ENCODE measurements at regions of chr4 and their contacts with region 1.

Region 1: DNA sequence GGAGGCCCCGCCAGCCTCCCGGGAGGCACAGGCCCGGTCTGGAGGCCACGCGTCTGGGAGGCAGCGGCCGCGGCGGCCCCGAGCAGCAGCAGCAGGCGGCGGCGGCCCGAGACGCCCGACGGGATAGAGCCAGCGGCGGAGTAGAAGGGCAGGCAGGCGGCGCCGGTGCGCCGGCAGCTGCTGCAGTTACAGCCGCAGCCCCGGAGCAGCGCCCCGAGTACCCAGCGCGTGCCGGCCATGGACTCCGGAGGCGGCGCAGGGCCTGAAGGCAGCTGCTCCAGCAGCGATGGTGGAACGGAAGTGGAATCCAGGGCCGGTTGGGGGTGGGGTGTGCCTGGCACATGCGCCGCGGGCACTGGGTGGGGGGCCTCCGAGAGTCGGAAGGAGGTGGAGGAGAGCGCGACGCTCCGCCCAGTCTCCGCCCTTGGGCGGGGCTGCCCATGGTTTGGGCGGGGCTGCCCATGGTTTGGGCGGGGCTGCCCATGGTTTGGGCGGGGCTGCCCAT is at the start of gene GRSF1:
- DNase-seq: peak; percentile 88
- ATAC-seq: peak; percentile 84
- H3K4me3 Mint-ChIP-seq: peak within 1 kb of the TSS; percentile 93
- H3K27ac Mint-ChIP-seq: peak within 1 kb of the TSS; percentile 93
- H3K4me1 Mint-ChIP-seq: peaks cover 63% of the 10 kb centered on the region
- H3K27me3 Mint-ChIP-seq: no peaks in the 10 kb centered on the region
- CTCF ChIP-seq: no peak
- total RNA-seq, gene GRSF1: 61.1 and 63.5 TPM in 2 replicates

Region 2: GRCh38 chr4:70687821-70688794 is 151.5 kb before region 1 on chr4 and contains the start of gene UTP3:
- CTCF ChIA-PET with region 1: no interaction called
- POLR2A ChIA-PET with region 1: interaction called, 6 read pairs
- intact Hi-C with region 1: loop called (anchors 1 kb)
- DNase-seq: peak; percentile 83
- ATAC-seq: peak; percentile 88
- H3K4me3 Mint-ChIP-seq: peak within 1 kb of the TSS; percentile 99
- H3K27ac Mint-ChIP-seq: peak within 1 kb of the TSS; percentile 100
- H3K4me1 Mint-ChIP-seq: peaks cover 48% of the 10 kb centered on the region
- H3K27me3 Mint-ChIP-seq: no peaks in the 10 kb centered on the region
- CTCF ChIP-seq: peak; percentile 96
- total RNA-seq, gene UTP3: 38.5 and 40.1 TPM in 2 replicates

Region 3: GRCh38 chr4:70855464-70855863 is 15.8 kb after region 1 on chr4:
- CTCF ChIA-PET with region 1: no interaction called
- POLR2A ChIA-PET with region 1: no interaction called
- intact Hi-C with region 1: no loop called
- DNase-seq: no peak
- ATAC-seq: no peak
- H3K4me3 Mint-ChIP-seq: no peak overlapping the region
- H3K27ac Mint-ChIP-seq: no peak overlapping the region
- H3K4me1 Mint-ChIP-seq: no peaks in the 10 kb centered on the region
- H3K27me3 Mint-ChIP-seq: no peaks in the 10 kb centered on the region
- CTCF ChIP-seq: no peak

Region 4: GRCh38 chr4:70874268-70875156 is 34.9 kb after region 1 on chr4:
- CTCF ChIA-PET with region 1: no interaction called
- POLR2A ChIA-PET with region 1: interaction called, 16 read pairs
- intact Hi-C with region 1: loop called (anchors 1 kb)
- DNase-seq: no peak
- ATAC-seq: peak; percentile 91
- H3K4me3 Mint-ChIP-seq: peak overlapping the region; percentile 71
- H3K27ac Mint-ChIP-seq: peak overlapping the region; percentile 69
- H3K4me1 Mint-ChIP-seq: peaks cover 29% of the 10 kb centered on the region
- H3K27me3 Mint-ChIP-seq: no peaks in the 10 kb centered on the region
- CTCF ChIP-seq: no peak

Region 5: DNA sequence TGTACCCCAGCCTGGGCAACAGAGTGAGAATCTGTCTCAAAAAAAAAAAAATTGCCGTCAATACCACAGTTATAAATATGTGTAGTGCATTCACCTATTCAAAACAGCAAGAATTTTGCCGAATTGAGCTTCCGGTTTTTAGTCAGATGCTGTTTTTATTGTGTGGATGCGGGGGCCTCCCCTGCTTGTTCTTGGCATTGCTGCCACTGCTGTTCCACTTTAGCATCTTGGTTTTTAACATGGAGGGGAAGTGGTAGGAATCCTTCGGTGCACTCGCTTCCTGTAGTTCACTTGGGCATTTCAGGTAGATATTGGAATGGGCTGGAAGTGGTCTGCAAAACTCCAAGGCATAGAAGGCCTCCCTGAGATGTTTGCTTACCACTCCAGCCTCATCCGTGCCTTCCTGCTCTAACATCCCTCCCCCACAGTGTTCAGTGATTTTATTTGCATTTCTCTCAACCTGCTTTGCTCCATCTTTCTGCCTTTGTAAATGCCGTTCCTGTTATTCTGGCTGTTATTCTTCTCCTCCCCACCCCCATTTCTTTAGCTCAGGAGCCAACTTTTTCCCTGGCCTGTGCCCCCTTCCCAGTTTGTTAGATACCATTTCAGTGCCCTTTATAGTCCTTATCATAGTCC is 88.0 kb after region 1 on chr4:
- CTCF ChIA-PET with region 1: no interaction called
- POLR2A ChIA-PET with region 1: interaction called, 21 read pairs
- intact Hi-C with region 1: no loop called
- DNase-seq: no peak
- ATAC-seq: peak; percentile 45
- H3K4me3 Mint-ChIP-seq: peak overlapping the region; percentile 33
- H3K27ac Mint-ChIP-seq: peak overlapping the region; percentile 68
- H3K4me1 Mint-ChIP-seq: peaks cover 51% of the 10 kb centered on the region
- H3K27me3 Mint-ChIP-seq: no peaks in the 10 kb centered on the region
- CTCF ChIP-seq: no peak

Region 6: DNA sequence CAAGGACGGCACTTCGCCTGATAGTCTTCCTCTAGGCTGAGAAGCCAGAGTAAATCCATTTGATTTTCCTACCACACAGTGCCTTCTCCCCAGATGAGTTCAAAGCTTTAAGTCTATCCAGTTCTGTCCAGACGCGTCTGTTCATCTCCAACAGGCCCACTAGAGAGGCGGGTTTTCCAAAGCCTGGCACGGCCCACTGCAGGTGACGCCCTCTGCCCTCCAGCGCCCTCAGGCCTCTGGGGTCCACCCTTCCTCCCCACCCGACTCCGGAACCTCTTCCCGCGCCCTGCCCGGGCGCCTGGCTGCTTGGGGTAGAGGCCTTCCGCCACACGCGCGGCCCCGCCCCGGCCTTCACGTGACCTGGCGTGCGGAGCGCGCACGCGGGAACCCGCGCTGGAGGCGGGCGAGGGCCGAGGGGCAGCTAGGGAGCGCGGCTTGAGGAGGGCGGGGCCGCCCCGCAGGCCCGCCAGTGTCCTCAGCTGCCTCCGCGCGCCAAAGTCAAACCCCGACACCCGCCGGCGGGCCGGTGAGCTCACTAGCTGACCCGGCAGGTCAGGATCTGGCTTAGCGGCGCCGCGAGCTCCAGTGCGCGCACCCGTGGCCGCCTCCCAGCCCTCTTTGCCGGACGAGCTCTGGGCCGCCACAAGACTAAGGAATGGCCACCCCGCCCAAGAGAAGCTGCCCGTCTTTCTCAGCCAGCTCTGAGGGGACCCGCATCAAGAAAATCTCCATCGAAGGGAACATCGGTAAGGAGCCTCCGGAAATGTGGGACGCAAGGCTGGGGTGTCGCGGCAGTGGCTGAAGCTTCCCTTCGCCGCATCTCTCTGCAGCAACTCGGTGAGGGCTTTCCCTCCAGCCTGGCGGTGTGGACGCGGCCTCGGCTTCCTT is 153.8 kb after region 1 on chr4 and contains the start of gene DCK:
- CTCF ChIA-PET with region 1: no interaction called
- POLR2A ChIA-PET with region 1: interaction called, 45 read pairs
- intact Hi-C with region 1: loop called (anchors 1 kb)
- DNase-seq: peak; percentile 91
- ATAC-seq: peak; percentile 81
- H3K4me3 Mint-ChIP-seq: peak within 1 kb of the TSS; percentile 94
- H3K27ac Mint-ChIP-seq: peak within 1 kb of the TSS; percentile 94
- H3K4me1 Mint-ChIP-seq: peaks cover 55% of the 10 kb centered on the region
- H3K27me3 Mint-ChIP-seq: no peaks in the 10 kb centered on the region
- CTCF ChIP-seq: no peak
- total RNA-seq, gene DCK: 32.6 and 34.3 TPM in 2 replicates

Region 7: GRCh38 chr4:71184195-71184781 is 344.6 kb after region 1 on chr4:
- CTCF ChIA-PET with region 1: no interaction called
- POLR2A ChIA-PET with region 1: no interaction called
- intact Hi-C with region 1: loop called (anchors 10 kb)
- DNase-seq: no peak
- ATAC-seq: peak; percentile 55
- H3K4me3 Mint-ChIP-seq: peak overlapping the region; percentile 33
- H3K27ac Mint-ChIP-seq: no peak overlapping the region
- H3K4me1 Mint-ChIP-seq: peaks cover 24% of the 10 kb centered on the region
- H3K27me3 Mint-ChIP-seq: peaks cover 30% of the 10 kb centered on the region
- CTCF ChIP-seq: no peak

Measured in activated B cell treated with CpG ODN at 0.5 μM for 24 hours (primary cell).